BJ (cell line): ENCODE measurements at regions of chr11 and their contacts with region 1.

Region 1: GRCh38 chr11:123519055-123519796 is 89.2 kb downstream of the GRAMD1B start:
- DNase-seq: no peak
- H3K4me3 ChIP-seq: no peak overlapping the region
- H3K27me3 ChIP-seq: no peaks in the 10 kb centered on the region
- CTCF ChIP-seq: no peak

Region 2: DNA sequence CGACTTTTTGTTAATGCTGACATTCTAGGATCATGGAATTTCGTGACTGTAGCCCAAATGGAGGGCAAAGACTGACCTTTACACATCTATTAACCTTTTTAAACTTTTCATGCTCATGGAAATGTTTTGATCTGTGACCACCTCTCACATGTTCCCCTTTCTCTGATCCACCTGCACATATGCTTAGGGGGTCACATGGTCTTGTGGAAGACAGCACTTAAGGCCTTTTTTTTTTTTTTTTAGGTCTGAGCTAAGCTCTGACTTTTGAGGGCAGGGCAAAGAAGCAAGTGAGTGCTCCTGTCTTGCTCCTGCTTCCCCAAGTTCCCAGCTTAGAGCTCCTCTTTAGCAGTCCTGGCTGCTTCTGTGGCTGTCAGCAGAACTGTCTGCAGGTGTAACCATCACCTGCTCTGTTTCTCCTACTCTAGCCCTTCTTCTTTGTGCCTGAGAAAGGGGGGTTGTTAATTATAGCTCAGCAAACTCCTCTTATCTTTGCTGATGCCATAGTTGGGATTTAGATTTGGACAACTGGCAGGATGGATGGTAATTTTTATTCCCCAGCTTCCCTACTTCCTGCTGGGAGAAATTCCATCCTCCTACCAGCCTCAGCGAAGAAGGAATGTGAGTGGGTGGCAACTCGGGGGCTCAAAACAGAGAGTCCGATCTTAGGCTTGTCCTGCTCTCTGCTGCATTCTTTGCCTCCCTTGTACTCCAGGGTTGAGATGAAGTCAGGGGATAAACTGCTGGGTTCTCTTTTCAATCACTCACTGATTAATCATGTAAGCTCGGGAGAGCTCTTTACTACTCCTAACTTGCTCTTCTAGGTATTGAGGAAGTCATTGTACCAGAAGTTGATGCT is 24.8 kb before region 1 on chr11:
- CTCF ChIA-PET with region 1: interaction called, 3 read pairs
- POLR2A ChIA-PET with region 1: interaction called, 16 read pairs
- DNase-seq: no peak
- H3K4me3 ChIP-seq: no peak overlapping the region
- H3K27me3 ChIP-seq: no peaks in the 10 kb centered on the region
- CTCF ChIP-seq: no peak